A549 (cell line): ENCODE measurements at regions of chr15 and their contacts with region 1.

Region 1: GRCh38 chr15:60326824-60327654 is 70.7 kb downstream of the ANXA2 start:
- DNase-seq: peak in 1 of 2 experiments; percentile 67
- ATAC-seq: peak; percentile 56 to 72; a peak in 5 of 6 replicates
- H3K4me3 ChIP-seq: no peak overlapping the region
- H3K27ac ChIP-seq: no peak overlapping the region
- H3K4me1 ChIP-seq: peaks cover 7% of the 10 kb centered on the region
- CTCF ChIP-seq: peak; percentile 99
- EP300 ChIP-seq: no peak
- POLR2A ChIP-seq: no peak
- RAD21 ChIP-seq: peak; percentile 96 to 98

Region 2: GRCh38 chr15:59688841-59689625 is 638.0 kb before region 1 on chr15 and contains the start of gene BNIP2:
- CTCF ChIA-PET with region 1: interaction called, 132 read pairs
- POLR2A ChIA-PET with region 1: interaction called, 5 read pairs
- DNase-seq: peak; percentile 98 to 100
- ATAC-seq: peak; percentile 95 to 98
- H3K4me3 ChIP-seq: peak within 1 kb of the TSS; percentile 80
- H3K27ac ChIP-seq: peak within 1 kb of the TSS; percentile 94 to 97
- H3K4me1 ChIP-seq: peaks cover 29% of the 10 kb centered on the region
- CTCF ChIP-seq: no peak
- EP300 ChIP-seq: 0 out of 5 replicates have a peak, but pooled peaks of 1 of the 2 experiments have one; percentile 15
- POLR2A ChIP-seq: peak; percentile 56
- RAD21 ChIP-seq: no peak
- polyA plus RNA-seq, gene BNIP2: 93.6 and 146 TPM in 2 replicates

Region 3: GRCh38 chr15:59725172-59725486 is 601.9 kb before region 1 on chr15:
- CTCF ChIA-PET with region 1: interaction called, 148 read pairs
- POLR2A ChIA-PET with region 1: no interaction called
- DNase-seq: no peak
- ATAC-seq: no peak
- H3K4me3 ChIP-seq: no peak overlapping the region
- H3K27ac ChIP-seq: no peak overlapping the region
- H3K4me1 ChIP-seq: peaks cover 8% of the 10 kb centered on the region; the same call in 2 of the 3 replicates
- CTCF ChIP-seq: no peak
- EP300 ChIP-seq: no peak
- POLR2A ChIP-seq: no peak
- RAD21 ChIP-seq: no peak

Region 4: DNA sequence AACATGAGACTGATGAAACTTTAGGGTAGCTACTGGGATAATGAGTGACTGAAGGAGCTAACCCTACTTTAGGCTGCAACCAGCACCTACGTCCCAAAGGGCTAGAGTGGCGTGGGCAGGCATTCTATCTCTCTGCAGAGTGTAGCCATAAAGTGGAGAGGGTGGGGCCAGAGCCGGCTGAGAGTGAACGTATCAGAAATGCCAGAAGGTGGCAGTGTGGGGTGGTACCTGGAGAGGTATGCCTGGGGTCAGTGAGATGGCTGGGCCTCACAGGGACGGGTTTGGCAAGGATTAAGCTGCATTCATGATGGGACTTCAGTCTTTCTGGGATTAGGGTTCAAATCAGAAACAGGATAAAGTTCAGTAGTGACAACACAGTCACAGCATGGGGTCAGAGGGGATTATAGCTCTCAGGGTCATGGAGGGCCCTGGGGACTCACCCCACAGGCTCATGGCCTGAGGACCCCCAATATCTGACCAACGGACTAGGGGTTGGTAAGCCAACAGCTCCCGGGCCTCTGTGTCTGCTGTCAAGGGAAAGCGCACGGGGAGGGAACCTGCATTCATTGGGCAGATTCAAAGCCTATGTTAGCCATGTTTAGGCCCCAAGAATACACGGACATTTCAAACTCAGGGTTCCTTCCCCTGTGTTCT is 409.4 kb before region 1 on chr15:
- CTCF ChIA-PET with region 1: interaction called, 42 read pairs
- POLR2A ChIA-PET with region 1: no interaction called
- DNase-seq: peak; percentile 61 to 73
- ATAC-seq: peak; percentile 94 to 99
- H3K4me3 ChIP-seq: no peak overlapping the region
- H3K27ac ChIP-seq: no peak overlapping the region
- H3K4me1 ChIP-seq: no peaks in the 10 kb centered on the region
- CTCF ChIP-seq: peak; percentile 61
- EP300 ChIP-seq: no peak
- POLR2A ChIP-seq: no peak
- RAD21 ChIP-seq: peak; percentile 64 to 78

Region 5: DNA sequence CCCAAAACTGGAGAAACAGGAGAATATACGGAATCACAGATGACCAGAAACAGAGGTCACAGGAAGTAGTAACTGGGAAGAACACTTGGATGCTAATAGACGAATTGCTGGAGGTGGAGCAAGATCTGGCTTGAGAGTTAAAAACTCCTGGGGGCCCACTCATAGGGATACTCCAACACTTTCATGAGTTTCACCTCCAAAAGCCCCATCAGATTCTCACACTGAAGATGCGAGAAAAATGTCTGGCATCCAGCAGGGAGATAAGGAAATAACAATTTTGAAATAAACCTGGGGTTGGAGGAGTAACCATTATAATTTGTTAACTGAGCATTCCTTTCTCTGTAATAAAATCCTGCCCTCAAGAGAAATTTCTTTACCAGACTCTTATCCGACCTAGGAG is 83.3 kb before region 1 on chr15:
- CTCF ChIA-PET with region 1: no interaction called
- POLR2A ChIA-PET with region 1: no interaction called
- DNase-seq: no peak
- ATAC-seq: no peak
- H3K4me3 ChIP-seq: no peak overlapping the region
- H3K27ac ChIP-seq: no peak overlapping the region
- H3K4me1 ChIP-seq: no peaks in the 10 kb centered on the region
- CTCF ChIP-seq: no peak
- EP300 ChIP-seq: no peak
- POLR2A ChIP-seq: no peak
- RAD21 ChIP-seq: no peak

Region 6: DNA sequence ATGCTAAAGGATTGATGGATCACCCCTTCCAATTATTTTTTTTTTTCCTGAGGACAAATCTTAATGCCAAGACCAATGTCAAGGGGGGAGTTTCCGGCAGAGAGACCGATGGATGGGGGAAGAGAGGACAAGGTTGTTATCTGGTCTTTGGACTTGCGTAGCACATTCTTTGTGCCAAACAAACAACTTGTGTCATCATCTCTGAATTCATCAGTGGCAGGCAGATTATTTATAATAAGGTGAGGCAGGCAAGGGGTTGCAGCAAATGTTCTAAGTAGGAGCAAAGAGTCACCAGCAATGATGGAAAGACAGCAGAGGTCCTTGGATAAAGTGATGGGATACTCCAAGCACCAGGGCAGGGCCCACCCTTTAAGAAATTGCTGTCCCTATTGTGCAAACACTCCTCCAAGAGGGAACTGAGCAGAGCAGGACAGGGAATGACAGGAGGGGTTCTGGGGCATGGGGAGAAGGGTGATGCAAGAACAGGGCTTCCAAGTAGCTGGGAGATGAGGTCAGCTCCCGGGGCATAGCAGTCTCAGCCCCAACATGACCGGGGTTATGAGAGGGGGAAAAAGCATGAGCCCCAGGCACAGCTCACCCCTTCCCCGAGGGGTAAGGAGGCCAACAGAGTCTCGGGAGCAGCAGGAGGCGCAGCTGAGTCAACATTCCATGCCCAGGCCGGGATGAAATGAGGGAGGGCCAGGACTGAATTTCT is 13.3 kb after region 1 on chr15:
- CTCF ChIA-PET with region 1: interaction called, 77 read pairs
- POLR2A ChIA-PET with region 1: no interaction called
- DNase-seq: no peak
- ATAC-seq: peak; percentile 17 to 30; a peak in 5 of 6 replicates
- H3K4me3 ChIP-seq: no peak overlapping the region
- H3K27ac ChIP-seq: peak overlapping the region; percentile 10 to 56; a peak in 4 of 6 replicates
- H3K4me1 ChIP-seq: peaks cover 47% of the 10 kb centered on the region
- CTCF ChIP-seq: peak; percentile 23; the same call in 1 of the 3 replicates
- EP300 ChIP-seq: no peak
- POLR2A ChIP-seq: no peak
- RAD21 ChIP-seq: peak in 1 of 2 experiments; percentile 38; a peak in 2 of 5 replicates

Region 7: DNA sequence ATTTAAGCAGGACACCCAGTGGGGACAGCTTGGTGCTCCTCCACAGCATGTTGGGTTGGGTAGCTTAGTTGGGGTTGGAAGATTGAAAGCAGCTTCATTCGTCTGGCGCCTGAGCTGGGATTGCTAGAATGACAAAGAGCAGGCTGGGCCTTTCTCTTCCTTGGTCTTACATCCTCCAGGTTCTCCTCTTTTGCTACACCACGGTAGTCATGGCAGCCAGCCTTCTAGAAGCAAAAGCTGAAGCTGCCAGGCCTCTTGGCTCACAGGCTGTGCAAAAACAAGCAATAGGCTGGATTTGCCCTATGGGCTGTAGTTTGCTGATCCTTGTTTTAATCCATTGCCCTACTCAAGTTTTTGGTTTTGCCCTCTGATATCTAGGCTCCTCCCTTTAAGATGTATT is 73.9 kb after region 1 on chr15:
- CTCF ChIA-PET with region 1: no interaction called
- POLR2A ChIA-PET with region 1: no interaction called
- DNase-seq: no peak
- ATAC-seq: no peak
- H3K4me3 ChIP-seq: no peak overlapping the region
- H3K27ac ChIP-seq: peak overlapping the region; percentile 97 to 99
- H3K4me1 ChIP-seq: peaks cover 57% of the 10 kb centered on the region
- CTCF ChIP-seq: no peak
- EP300 ChIP-seq: no peak
- POLR2A ChIP-seq: no peak
- RAD21 ChIP-seq: no peak

Region 8: DNA sequence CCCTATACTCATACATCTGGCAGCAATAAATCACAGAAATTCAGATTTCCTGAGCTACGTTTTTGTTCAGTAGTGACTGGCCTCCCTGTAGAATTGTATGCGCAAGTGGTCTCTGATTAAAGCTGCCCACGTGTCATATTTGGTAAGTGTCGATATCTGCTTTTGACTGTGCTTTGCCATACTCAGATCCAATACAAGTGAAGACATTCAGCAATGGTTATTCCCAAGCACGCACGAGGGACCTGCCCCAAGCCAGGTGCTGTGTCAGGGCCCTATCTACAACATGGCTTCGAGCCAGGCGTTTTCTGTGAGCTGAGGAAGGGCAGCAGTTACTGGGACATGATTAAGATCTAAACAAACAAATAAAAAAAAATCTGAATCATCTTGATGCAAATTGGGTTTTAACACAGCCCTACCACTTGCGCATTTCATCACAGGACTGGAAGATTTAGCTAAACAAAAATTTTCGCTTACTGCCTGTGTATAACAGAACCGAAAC is 199.1 kb after region 1 on chr15:
- CTCF ChIA-PET with region 1: interaction called, 123 read pairs
- POLR2A ChIA-PET with region 1: interaction called, 3 read pairs
- DNase-seq: no peak
- ATAC-seq: 0 out of 6 replicates have a peak, but pooled peaks of 1 of the 2 experiments have one; percentile 28
- H3K4me3 ChIP-seq: no peak overlapping the region
- H3K27ac ChIP-seq: no peak overlapping the region
- H3K4me1 ChIP-seq: no peaks in the 10 kb centered on the region; the same call in 2 of the 3 replicates
- CTCF ChIP-seq: no peak
- EP300 ChIP-seq: no peak
- POLR2A ChIP-seq: no peak
- RAD21 ChIP-seq: no peak